Mammary epithelial cell (primary cell): ENCODE measurements at regions of chr11 and their contacts with region 1.

Region 1: GRCh38 chr11:35030716-35031213 is 108.2 kb upstream of the CD44 start:
- DNase-seq: peak; percentile 97
- H3K4me3 ChIP-seq: peak overlapping the region in 1 of 3 experiments; percentile 4
- H3K27ac ChIP-seq: peak overlapping the region; percentile 97
- H3K4me1 ChIP-seq: peaks cover 45% of the 10 kb centered on the region
- H3K27me3 ChIP-seq: no peaks in the 10 kb centered on the region
- CTCF ChIP-seq: no peak

Region 2: GRCh38 chr11:34988294-34989255 is 42.2 kb before region 1 on chr11:
- CTCF ChIA-PET with region 1: no interaction called
- dilution Hi-C with region 1: no loop called
- in situ Hi-C with region 1: no loop called
- intact Hi-C with region 1: no loop called
- DNase-seq: peak; percentile 63
- H3K4me3 ChIP-seq: no peak overlapping the region
- H3K27ac ChIP-seq: no peak overlapping the region
- H3K4me1 ChIP-seq: no peaks in the 10 kb centered on the region
- H3K27me3 ChIP-seq: no peaks in the 10 kb centered on the region
- CTCF ChIP-seq: no peak

Region 3: GRCh38 chr11:35111161-35112055 is 80.6 kb after region 1 on chr11:
- CTCF ChIA-PET with region 1: no interaction called
- dilution Hi-C with region 1: loop called (anchors 5 kb)
- in situ Hi-C with region 1: no loop called
- intact Hi-C with region 1: no loop called
- DNase-seq: peak; percentile 99
- H3K4me3 ChIP-seq: peak overlapping the region in 1 of 3 experiments; percentile 17
- H3K27ac ChIP-seq: peak overlapping the region; percentile 94
- H3K4me1 ChIP-seq: peaks cover 70% of the 10 kb centered on the region
- H3K27me3 ChIP-seq: no peaks in the 10 kb centered on the region
- CTCF ChIP-seq: no peak